Left ventricle myocardium superior (tissue), 1 donor: ENCODE measurements at regions of chr14 and their contacts with region 1.

Region 1: DNA sequence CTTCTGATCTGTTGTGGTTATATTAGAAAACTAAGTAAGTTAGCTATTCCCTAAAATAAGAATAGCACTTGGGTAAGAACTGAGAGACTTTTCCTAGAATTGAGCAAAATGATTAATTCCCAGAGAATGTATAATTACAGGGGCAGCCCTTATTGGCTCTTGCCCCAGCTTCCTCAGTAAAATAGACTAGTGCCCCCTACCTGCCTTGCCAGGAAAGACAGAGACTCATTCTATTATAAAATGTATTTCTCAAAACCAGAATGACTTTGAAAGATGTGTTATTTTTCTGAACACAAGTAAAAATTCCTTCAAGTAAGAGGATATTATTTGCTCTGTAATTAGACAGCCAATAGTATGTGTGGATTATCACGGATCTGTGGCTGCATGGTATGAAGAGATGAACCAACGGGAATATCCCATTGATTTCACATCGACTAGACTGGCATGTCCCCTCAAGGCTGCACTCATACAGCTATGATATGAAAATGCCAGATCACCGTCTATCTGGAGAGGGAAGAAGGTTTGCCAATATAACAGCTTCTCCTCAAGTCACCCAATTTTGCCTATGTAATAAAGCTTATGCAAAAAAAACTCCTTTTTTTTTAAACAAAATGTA is 7.4 kb upstream of the GLRX5 start:
- DNase-seq: no peak
- ATAC-seq: peak; percentile 63

Region 2: DNA sequence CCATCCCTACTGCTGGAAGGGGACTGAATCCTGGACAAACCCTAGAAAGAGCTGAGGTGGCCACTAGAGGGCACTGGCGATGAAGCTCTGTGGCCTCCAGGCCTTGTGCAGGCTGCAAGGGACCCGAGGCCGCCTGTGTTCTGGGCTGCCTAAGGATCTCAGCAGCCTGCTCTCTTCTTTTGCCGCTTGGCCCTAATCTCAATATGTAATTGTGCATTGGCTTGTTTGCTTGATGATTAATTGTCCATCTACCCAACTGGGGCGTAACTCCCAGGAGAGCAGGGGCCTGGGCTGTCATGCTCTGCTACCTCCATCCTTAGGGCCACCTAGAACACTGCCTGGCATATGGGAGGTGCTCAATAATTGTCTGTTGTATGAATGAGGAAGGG is 84.9 kb before region 1 on chr14:
- intact Hi-C with region 1: loop called (anchors 5 kb)
- DNase-seq: peak; percentile 89
- ATAC-seq: peak; percentile 96

Region 3: DNA sequence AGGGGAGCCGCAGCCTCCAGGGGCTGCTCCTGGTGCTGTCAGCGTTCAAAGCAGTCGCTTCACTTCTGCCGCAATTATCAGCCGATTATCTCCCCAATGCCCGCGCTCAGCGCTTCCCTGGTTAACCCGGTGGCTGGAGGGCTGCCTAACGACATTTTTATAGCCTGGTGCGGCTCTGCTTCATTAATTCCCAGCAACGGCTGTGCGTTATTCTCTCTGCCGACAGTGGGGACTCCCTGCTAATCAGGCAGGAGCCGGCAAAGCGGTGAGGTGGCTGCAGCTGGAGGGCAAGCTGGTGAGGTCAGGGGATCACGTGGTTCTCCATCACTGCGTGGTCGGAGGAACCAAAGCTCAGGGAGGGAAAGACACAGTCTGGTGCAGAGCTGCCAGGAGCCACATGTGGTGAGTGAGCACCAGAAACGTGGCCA is 70.3 kb after region 1 on chr14:
- intact Hi-C with region 1: no loop called
- DNase-seq: no peak
- ATAC-seq: peak; percentile 30